Mammary epithelial cell (primary cell): ENCODE measurements at regions of chr17 and their contacts with region 1.

Region 1: DNA sequence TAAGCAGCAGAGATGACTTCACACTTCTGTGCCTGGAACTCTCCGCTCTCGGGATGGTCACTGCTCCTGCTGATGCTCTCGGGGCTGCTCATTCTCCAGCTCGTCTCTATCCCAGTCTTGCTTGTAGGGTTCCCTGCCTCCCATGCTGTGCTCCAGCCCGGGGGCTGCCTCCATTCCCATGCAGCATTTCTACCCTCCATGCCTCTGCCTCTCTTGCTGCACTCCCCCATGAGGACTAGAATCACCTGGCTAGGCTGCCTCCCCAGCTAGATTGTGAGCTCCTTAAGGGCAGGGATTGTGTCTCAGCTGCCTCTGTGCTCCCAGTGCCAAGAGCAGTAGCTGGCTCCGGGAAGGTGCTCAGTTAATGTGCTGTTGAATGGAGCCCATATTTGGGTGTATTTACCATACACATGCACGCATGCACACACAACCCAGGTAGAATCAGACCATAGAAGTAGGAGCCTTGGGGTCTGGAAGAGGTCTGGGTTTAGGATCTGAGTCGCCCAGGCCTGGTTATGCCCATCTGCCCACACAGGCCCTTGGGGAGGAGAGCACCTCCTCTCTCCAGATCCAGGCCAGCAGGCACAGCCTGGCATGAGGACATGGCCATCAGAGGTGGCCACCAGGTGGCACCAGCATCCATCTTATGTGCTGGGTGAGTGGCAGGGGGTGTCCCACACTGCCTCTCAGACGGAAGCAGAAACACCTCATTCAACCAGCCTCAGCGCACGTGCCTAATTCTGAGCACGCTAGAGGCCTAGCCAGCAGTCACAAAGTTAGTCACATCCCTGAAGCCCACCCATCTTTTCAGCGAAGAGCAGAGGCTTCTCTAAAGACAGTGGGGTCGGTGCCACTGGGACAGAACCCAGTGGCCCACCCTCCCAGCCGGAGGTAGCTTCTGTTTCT is 9.3 kb downstream of the GIT1 start:
- DNase-seq: peak; percentile 73
- H3K4me3 ChIP-seq: no peak overlapping the region
- H3K27ac ChIP-seq: no peak overlapping the region
- H3K4me1 ChIP-seq: peaks cover 50% of the 10 kb centered on the region
- H3K27me3 ChIP-seq: no peaks in the 10 kb centered on the region
- CTCF ChIP-seq: peak; percentile 80 to 97

Region 2: DNA sequence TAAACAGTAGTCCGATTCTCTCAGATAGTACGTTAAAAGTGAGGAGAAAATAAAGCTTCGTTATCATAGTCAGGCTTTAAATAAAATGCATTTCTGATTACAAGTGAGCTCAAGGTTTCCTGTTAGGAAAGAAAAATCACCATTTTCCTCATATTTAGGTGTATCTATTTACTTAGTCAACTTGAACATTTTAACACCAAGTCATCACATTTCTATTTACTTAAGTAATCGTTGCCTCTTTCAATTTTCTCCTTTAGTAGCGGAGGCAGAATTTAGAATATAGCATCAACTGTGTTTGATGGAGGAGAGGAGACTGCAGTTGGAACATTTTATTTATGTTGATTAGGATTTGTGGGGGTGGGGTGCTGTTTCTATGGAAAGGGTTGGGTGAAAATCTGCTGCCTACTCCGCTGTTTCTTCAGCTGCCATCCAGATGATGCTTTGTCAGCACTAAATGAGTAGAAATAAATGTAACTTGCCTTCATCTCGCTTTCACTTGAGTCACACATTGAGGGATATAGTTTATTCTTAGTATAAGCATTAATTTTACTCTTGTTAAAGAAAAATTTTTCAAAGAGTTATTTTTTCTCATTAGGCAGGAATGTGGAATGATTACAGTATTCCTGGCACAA is 55.5 kb before region 1 on chr17:
- CTCF ChIA-PET with region 1: no interaction called
- dilution Hi-C with region 1: no loop called
- in situ Hi-C with region 1: no loop called
- intact Hi-C with region 1: no loop called
- DNase-seq: no peak
- H3K4me3 ChIP-seq: no peak overlapping the region
- H3K27ac ChIP-seq: no peak overlapping the region
- H3K4me1 ChIP-seq: no peaks in the 10 kb centered on the region
- H3K27me3 ChIP-seq: no peaks in the 10 kb centered on the region
- CTCF ChIP-seq: no peak

Region 3: GRCh38 chr17:29617125-29617480 is 37.0 kb after region 1 on chr17:
- CTCF ChIA-PET with region 1: interaction called, 6 read pairs
- dilution Hi-C with region 1: no loop called
- in situ Hi-C with region 1: loop called in 1 of 2 experiments (anchors 5 kb)
- intact Hi-C with region 1: loop called (anchors 1 kb)
- DNase-seq: no peak
- H3K4me3 ChIP-seq: no peak overlapping the region
- H3K27ac ChIP-seq: no peak overlapping the region
- H3K4me1 ChIP-seq: peaks cover 51% of the 10 kb centered on the region
- H3K27me3 ChIP-seq: no peaks in the 10 kb centered on the region
- CTCF ChIP-seq: peak; percentile 31 to 45

Region 4: GRCh38 chr17:29760761-29761696 is 180.9 kb after region 1 on chr17:
- CTCF ChIA-PET with region 1: no interaction called
- dilution Hi-C with region 1: no loop called
- in situ Hi-C with region 1: no loop called
- intact Hi-C with region 1: loop called (anchors 5 kb)
- DNase-seq: peak; percentile 82
- H3K4me3 ChIP-seq: peak overlapping the region; percentile 81 to 89 (median 85)
- H3K27ac ChIP-seq: peak overlapping the region; percentile 53
- H3K4me1 ChIP-seq: peaks cover 11% of the 10 kb centered on the region
- H3K27me3 ChIP-seq: no peaks in the 10 kb centered on the region
- CTCF ChIP-seq: no peak

Region 5: DNA sequence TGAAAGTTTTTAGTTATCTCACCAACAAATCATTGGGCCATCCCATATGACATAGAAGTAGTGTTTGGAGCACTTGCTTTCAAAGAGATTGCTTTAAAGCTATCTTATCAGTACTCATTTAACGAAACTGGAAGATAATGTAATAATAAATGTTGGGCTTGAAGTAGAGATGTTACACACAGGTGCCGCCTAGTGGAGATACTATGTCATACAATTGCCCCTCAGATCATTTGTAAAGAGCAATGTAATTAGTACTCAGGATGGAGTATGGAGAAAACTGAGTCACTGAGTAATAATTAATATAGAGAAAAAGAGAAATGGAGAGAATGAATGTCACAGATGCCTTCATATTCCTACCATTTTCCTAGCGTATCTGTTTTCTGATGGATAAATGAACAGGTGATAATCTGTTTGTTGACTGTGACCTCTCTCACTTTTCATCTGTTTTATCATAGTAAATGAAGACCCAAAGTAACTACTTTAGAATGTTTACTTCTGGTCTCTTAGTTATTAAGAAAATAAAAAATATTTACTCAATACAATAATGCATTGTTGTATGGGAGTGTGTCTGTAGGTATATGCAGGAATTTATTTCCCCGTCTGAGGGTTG is 441.7 kb after region 1 on chr17:
- CTCF ChIA-PET with region 1: no interaction called
- dilution Hi-C with region 1: no loop called
- in situ Hi-C with region 1: no loop called
- intact Hi-C with region 1: loop called (anchors 5 kb)
- DNase-seq: peak; percentile 35
- H3K4me3 ChIP-seq: no peak overlapping the region
- H3K27ac ChIP-seq: no peak overlapping the region
- H3K4me1 ChIP-seq: no peaks in the 10 kb centered on the region
- H3K27me3 ChIP-seq: no peaks in the 10 kb centered on the region
- CTCF ChIP-seq: peak; percentile 80 to 90